Activated B cell treated with CpG ODN at 0.5 μM for 24 hours (primary cell): ENCODE measurements at regions of chr10 and their contacts with region 1.

Region 1: DNA sequence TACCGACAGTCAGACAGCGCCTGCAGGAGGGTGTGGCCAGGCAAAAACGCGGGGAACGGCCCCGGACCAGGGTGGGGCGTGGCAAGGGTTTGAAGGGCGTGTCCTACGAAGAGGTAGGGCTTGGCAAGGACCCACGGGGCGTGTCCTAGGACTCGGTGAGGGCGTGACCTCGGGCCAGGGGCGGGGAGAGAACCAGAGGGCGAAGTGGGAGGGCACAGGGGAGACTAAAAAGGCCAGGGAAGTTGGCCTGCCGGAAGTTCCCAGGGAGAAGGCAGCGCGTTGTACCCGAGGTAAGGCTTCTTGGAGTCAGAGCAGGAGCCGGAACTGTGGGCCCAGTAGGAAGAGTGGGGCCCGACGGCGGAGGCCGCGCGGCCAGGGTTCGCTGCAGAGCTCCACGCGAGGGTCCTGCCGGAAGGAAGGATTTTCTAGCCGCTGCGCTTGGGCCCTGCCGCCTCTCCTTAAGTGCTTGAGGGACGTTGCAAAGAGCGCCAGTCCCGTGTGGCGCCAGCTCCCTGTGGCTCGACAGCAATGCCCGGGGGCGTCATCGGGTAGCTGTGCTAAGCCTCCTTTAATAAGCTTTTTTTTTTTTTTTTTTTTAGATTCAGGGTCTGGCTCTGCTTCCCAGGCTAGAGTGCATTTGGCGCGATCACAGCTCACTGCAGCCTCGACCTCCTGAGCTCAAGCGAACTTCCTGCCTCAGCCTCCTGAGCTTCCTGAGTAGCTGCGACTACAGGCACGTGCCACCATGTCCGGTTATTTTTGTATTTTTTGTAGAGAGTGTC is at the start of gene PTER:
- DNase-seq: peak; percentile 97
- ATAC-seq: peak; percentile 99
- H3K4me3 Mint-ChIP-seq: peak within 1 kb of the TSS; percentile 95
- H3K27ac Mint-ChIP-seq: peak within 1 kb of the TSS; percentile 88
- H3K4me1 Mint-ChIP-seq: peaks cover 48% of the 10 kb centered on the region
- H3K27me3 Mint-ChIP-seq: peaks cover 3% of the 10 kb centered on the region
- CTCF ChIP-seq: no peak
- total RNA-seq, gene PTER: 14.9 and 15.0 TPM in 2 replicates

Region 2: DNA sequence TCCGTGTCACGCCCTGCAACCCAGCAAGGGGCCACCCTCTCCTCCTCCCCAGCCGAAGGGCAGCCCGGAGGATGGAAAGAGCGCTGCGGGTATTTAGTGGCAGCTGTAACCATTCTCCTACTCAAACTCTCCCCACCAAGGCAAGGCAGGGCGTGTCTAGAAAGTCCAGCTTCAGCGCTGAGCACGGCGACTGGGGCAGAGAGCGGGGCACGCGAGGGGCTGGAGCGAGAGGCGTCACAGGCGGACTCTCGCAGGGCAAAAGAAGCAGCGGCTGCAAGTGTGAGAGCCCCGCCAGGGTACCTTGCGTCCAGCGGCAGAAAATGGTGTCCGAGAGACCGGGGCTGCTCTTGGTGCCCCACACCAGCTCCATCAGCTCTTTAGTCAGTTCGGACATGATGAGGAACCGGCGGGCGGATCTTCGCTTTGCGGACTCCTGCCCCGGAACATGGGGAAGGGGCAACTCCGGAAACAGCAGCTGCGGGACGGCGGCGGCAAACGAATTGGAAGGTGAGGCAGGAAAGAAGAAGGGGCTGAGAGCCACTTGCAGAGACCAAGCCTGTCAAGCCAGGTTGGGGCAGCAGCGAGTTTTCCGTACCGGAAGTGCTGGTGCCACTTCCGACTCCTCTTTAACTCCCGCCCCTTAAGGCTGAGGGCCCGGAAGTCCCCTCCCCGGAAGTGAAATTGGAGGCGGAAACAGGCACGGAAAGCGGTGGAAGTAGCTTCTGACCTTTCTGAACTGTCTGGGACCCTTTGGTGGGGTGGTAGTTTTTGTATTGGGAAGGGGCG is 576.9 kb before region 1 on chr10 and contains the start of gene MINDY3:
- CTCF ChIA-PET with region 1: no interaction called
- POLR2A ChIA-PET with region 1: interaction called, 18 read pairs
- intact Hi-C with region 1: loop called (anchors 1 kb)
- DNase-seq: peak; percentile 76
- ATAC-seq: peak; percentile 92
- H3K4me3 Mint-ChIP-seq: peak within 1 kb of the TSS; percentile 99
- H3K27ac Mint-ChIP-seq: peak within 1 kb of the TSS; percentile 92
- H3K4me1 Mint-ChIP-seq: peaks cover 39% of the 10 kb centered on the region
- H3K27me3 Mint-ChIP-seq: peaks cover 16% of the 10 kb centered on the region
- CTCF ChIP-seq: no peak
- total RNA-seq, gene MINDY3: 23.2 and 23.4 TPM in 2 replicates

Region 3: GRCh38 chr10:17673456-17674061 is 1236.6 kb after region 1 on chr10:
- CTCF ChIA-PET with region 1: no interaction called
- POLR2A ChIA-PET with region 1: no interaction called
- intact Hi-C with region 1: loop called (anchors 10 kb)
- DNase-seq: no peak
- ATAC-seq: no peak
- H3K4me3 Mint-ChIP-seq: no peak overlapping the region
- H3K27ac Mint-ChIP-seq: no peak overlapping the region
- H3K4me1 Mint-ChIP-seq: peaks cover 38% of the 10 kb centered on the region
- H3K27me3 Mint-ChIP-seq: no peaks in the 10 kb centered on the region
- CTCF ChIP-seq: no peak